ENCODE measurements at regions of chr12 and their contacts with region 1.

Region 1: GRCh38 chr12:101670007-101670687 is 27.3 kb upstream of the CHPT1 start:
- DNase-seq: peak; percentile 77 to 86 (median 78)
- H3K4me3 ChIP-seq: peak overlapping the region in 2 of 3 experiments; percentile 29 to 47
- H3K4me3 Mint-ChIP-seq: peak overlapping the region in 1 of 2 donors; percentile 79
- H3K27ac ChIP-seq: peak overlapping the region in 1 of 2 donors; percentile 71
- H3K27ac Mint-ChIP-seq: peak overlapping the region; percentile 87 to 93 (median 89)
- H3K4me1 ChIP-seq: peaks cover 40 to 42% of the 10 kb centered on the region in 2 donors
- H3K4me1 Mint-ChIP-seq: peaks cover 37% of the 10 kb centered on the region
- H3K27me3 ChIP-seq: no peaks in the 10 kb centered on the region
- H3K27me3 Mint-ChIP-seq: peaks cover 0 to 2% (median 0%) of the 10 kb centered on the region in 3 donors
- CTCF ChIP-seq: peak; percentile 80

Region 2: GRCh38 chr12:101616027-101616494 is 54.1 kb before region 1 on chr12:
- intact Hi-C with region 1: loop called in 1 of 2 experiments (anchors 10 kb)
- DNase-seq: peak; percentile 65 to 82 (median 70)
- H3K4me3 ChIP-seq: peak overlapping the region; percentile 37 to 80 (median 76)
- H3K4me3 Mint-ChIP-seq: peak overlapping the region; percentile 84 to 94
- H3K27ac ChIP-seq: peak overlapping the region; percentile 87 to 90
- H3K27ac Mint-ChIP-seq: peak overlapping the region; percentile 91 to 99 (median 98)
- H3K4me1 ChIP-seq: peaks cover 60 to 67% of the 10 kb centered on the region in 2 donors
- H3K4me1 Mint-ChIP-seq: peaks cover 73% of the 10 kb centered on the region
- H3K27me3 ChIP-seq: no peaks in the 10 kb centered on the region
- H3K27me3 Mint-ChIP-seq: peaks cover 0 to 2% (median 0%) of the 10 kb centered on the region in 3 donors
- CTCF ChIP-seq: no peak

Measured in CD14-positive monocyte (primary cell).